Activated T-helper 2 cell treated with anti-CD3 and anti-CD28 coated beads, Interferon-gamma antibody, Interleukin-2, Interleukin-4, amounts not matched to agents 10 μg/mL and 5 μg/mL and 100 μg/mL, durations not matched to agents 14 hours and 24 hours and 36 hours (primary cell): ENCODE measurements at regions of chr11 and their contacts with region 1.

Region 1: DNA sequence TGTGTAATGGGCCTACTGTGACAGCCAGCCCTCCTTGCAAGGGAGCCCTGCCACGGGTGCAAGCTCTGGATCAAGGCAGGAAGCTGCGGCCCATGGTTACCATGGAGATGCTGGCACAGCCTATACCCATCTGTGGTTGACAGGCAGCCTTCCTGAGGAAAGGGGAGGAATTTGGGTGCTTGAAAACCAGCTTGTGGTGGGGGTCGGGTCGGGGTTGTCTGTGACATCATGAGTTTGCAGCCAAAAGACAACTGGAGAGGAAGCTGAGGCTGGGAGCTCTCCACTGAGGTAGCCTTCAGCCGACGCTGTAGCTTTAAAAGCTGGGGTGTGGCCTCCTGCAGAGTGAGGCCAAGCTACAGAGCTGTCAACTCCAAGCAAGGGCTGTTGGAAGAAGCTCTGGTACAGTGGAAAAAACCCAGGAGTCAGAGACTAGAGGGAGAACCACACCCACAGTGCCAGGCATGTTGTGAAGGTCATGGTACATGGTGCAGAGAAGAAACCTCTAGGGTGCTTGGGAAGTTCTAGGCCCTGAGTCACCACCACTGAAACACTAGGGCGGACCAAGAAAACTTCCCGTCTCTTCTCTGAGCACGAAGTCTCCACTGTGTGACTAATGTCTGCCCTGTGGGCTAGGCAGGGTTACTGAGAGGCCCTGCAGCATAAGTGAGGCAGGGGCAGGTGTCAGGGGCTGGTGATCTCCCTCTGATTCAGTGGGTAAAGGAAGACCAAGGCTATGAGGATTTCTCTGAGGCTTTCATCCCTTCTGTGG is 10.8 kb upstream of the LDHA start:
- DNase-seq: peak; percentile 63
- H3K4me3 Mint-ChIP-seq: peak overlapping the region; percentile 75
- H3K27ac Mint-ChIP-seq: peak overlapping the region; percentile 100
- H3K4me1 Mint-ChIP-seq: peaks cover 35% of the 10 kb centered on the region
- H3K27me3 Mint-ChIP-seq: no peaks in the 10 kb centered on the region

Region 2: GRCh38 chr11:18012863-18013781 is 370.4 kb before region 1 on chr11 and contains the start of gene SERGEF:
- intact Hi-C with region 1: loop called (anchors 5 kb)
- DNase-seq: peak; percentile 93
- H3K4me3 Mint-ChIP-seq: peak within 1 kb of the TSS; percentile 99
- H3K27ac Mint-ChIP-seq: peak within 1 kb of the TSS; percentile 91
- H3K4me1 Mint-ChIP-seq: peaks cover 33% of the 10 kb centered on the region
- H3K27me3 Mint-ChIP-seq: no peaks in the 10 kb centered on the region
- total RNA-seq, gene SERGEF: 39.5 and 43.9 TPM in 2 replicates

Region 3: DNA sequence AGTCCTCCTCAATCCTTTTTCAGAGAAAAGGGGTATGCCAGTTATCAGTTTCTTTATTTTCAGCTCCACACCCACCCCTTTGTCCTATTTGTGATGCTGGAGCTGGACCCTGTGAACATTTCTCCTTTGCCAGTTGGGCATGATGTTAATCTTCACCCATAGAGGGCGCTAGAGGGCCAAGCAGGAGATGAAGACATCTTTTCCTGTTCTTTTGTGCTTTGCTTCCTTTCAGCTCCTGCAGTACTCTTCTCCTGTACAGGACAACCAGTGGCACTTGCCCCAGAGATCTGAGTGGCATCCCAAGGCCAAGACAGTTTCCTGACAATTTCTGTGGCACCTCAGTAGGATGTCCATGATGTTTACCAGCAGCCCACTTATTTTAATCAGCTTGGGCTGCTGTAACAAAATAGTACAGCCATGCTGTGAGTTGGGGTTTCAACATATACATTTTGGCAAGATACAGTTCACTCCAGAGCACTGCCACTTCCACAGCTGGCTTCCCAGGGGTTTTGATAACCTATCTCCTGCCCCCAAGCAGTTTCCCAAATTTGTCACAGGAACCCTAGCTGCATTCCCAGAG is 139.7 kb before region 1 on chr11:
- intact Hi-C with region 1: loop called (anchors 2 kb)
- DNase-seq: peak; percentile 63
- H3K4me3 Mint-ChIP-seq: no peak overlapping the region
- H3K27ac Mint-ChIP-seq: peak overlapping the region; percentile 54
- H3K4me1 Mint-ChIP-seq: peaks cover 25% of the 10 kb centered on the region
- H3K27me3 Mint-ChIP-seq: peaks cover 34% of the 10 kb centered on the region

Region 4: GRCh38 chr11:18395735-18396504 is 12.3 kb after region 1 on chr11:
- intact Hi-C with region 1: loop called (anchors 1 kb)
- DNase-seq: peak; percentile 97
- H3K4me3 Mint-ChIP-seq: peak overlapping the region; percentile 97
- H3K27ac Mint-ChIP-seq: peak overlapping the region; percentile 95
- H3K4me1 Mint-ChIP-seq: peaks cover 45% of the 10 kb centered on the region
- H3K27me3 Mint-ChIP-seq: no peaks in the 10 kb centered on the region

Region 5: GRCh38 chr11:20363500-20364411 is 1980.2 kb after region 1 on chr11 and contains the start of gene HTATIP2:
- intact Hi-C with region 1: loop called (anchors 10 kb)
- DNase-seq: peak; percentile 72
- H3K4me3 Mint-ChIP-seq: peak within 1 kb of the TSS; percentile 84
- H3K27ac Mint-ChIP-seq: peak within 1 kb of the TSS; percentile 90
- H3K4me1 Mint-ChIP-seq: peaks cover 60% of the 10 kb centered on the region
- H3K27me3 Mint-ChIP-seq: no peaks in the 10 kb centered on the region
- total RNA-seq, gene HTATIP2: 62.7 and 63.5 TPM in 2 replicates